PC-9 (cell line): ENCODE measurements at regions of chr15 and their contacts with region 1.

Region 1: DNA sequence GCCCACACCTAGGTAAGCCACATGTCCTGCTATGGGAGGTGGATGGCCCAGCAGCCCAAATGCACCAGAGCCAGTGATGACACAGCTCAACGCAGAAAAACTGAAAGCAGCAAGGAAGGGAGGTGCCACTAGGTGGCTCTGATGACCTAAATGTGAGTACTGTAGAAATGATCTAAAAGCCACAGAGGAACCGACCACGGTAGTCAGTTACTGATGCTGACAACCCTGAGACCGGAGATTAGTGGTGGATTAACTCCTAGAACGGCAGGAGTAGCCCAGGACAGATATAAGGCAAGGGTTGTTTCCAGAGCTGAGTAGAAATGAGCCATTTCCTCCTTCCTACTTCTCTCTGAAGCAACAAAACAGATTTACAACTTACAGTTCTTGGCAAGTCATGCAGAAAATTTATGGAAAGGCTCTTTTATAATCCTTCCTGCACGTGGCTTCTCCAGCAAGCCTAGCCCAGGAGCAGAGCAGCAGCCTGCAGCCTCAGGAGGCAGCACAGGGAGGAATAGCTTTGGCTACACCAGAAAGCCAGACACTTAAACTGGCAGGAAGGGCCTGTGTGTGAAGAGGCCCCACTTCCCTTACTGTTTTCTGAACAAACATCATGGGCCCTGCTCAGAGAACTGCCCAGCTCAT is 13.1 kb downstream of the FBXL22 start:
- DNase-seq: peak; percentile 68 to 77
- H3K4me3 ChIP-seq: no peak overlapping the region
- H3K27ac ChIP-seq: peak overlapping the region; percentile 55
- H3K4me1 ChIP-seq: peaks cover 22% of the 10 kb centered on the region
- H3K27me3 ChIP-seq: no peaks in the 10 kb centered on the region
- CTCF ChIP-seq: peak; percentile 84

Region 2: DNA sequence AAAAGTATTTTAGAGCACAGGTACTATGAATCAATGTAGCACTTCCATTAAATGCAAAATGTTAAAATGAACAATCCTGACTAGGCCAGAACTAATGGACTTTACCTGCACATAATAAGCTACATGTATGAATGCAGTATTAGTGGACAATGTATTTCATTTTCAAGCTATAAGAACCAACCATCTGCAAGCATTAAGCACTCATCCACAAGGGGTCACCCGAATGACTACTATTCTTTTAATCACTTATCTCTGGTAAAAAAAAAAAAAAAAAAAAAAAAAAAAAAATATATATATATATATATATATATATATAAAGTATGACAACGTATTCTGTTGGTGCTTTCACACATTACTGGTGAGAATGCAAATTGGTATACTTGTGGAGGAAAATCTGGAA is 216.2 kb after region 1 on chr15:
- CTCF ChIA-PET with region 1: interaction called, 17 read pairs
- POLR2A ChIA-PET with region 1: no interaction called
- intact Hi-C with region 1: no loop called
- DNase-seq: no peak
- H3K4me3 ChIP-seq: no peak overlapping the region
- H3K27ac ChIP-seq: no peak overlapping the region
- H3K4me1 ChIP-seq: no peaks in the 10 kb centered on the region
- H3K27me3 ChIP-seq: no peaks in the 10 kb centered on the region
- CTCF ChIP-seq: peak; percentile 38

Region 3: GRCh38 chr15:63833021-63833696 is 222.8 kb after region 1 on chr15:
- CTCF ChIA-PET with region 1: interaction called, 11 read pairs
- POLR2A ChIA-PET with region 1: no interaction called
- intact Hi-C with region 1: no loop called
- DNase-seq: peak in 1 of 2 experiments; percentile 37
- H3K4me3 ChIP-seq: peak overlapping the region; percentile 90
- H3K27ac ChIP-seq: no peak overlapping the region
- H3K4me1 ChIP-seq: peaks cover 16% of the 10 kb centered on the region
- H3K27me3 ChIP-seq: no peaks in the 10 kb centered on the region
- CTCF ChIP-seq: no peak

Region 4: DNA sequence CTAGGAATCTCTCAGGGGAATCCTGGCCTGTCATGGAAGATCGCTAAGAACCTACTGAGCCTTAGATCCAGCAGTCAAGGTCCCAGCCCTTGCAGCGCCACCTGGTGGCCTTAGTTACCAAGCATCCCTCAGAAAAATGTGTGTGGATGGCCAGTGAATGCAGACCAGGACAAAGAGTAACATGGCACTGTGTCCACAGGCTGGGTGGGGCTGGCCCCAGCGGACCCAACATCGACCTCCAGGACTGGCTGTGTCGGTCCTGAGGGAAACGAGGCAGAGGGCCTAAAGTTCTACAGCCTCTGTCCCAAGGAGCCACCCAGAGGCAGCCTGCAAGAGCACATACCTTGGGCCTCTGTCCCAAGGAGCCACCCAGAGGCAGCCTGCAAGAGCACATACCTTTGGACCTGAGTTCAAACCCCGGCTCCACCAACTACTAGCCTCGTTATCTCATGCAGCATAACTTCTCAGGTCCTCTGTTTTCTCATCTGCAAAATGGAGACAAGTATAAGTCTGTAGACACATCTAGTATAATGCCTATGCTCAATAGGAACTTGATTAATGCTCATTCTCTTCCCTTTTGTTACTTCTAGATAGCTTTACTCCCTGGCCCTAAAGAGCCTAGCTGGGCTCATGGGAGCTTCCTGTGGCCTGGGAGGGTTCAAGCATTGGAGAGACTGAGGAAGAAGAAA is 280.9 kb after region 1 on chr15:
- CTCF ChIA-PET with region 1: no interaction called
- POLR2A ChIA-PET with region 1: no interaction called
- intact Hi-C with region 1: loop called (anchors 5 kb)
- DNase-seq: peak; percentile 51 to 75
- H3K4me3 ChIP-seq: no peak overlapping the region
- H3K27ac ChIP-seq: no peak overlapping the region
- H3K4me1 ChIP-seq: peaks cover 13% of the 10 kb centered on the region
- H3K27me3 ChIP-seq: no peaks in the 10 kb centered on the region
- CTCF ChIP-seq: peak; percentile 84

Region 5: DNA sequence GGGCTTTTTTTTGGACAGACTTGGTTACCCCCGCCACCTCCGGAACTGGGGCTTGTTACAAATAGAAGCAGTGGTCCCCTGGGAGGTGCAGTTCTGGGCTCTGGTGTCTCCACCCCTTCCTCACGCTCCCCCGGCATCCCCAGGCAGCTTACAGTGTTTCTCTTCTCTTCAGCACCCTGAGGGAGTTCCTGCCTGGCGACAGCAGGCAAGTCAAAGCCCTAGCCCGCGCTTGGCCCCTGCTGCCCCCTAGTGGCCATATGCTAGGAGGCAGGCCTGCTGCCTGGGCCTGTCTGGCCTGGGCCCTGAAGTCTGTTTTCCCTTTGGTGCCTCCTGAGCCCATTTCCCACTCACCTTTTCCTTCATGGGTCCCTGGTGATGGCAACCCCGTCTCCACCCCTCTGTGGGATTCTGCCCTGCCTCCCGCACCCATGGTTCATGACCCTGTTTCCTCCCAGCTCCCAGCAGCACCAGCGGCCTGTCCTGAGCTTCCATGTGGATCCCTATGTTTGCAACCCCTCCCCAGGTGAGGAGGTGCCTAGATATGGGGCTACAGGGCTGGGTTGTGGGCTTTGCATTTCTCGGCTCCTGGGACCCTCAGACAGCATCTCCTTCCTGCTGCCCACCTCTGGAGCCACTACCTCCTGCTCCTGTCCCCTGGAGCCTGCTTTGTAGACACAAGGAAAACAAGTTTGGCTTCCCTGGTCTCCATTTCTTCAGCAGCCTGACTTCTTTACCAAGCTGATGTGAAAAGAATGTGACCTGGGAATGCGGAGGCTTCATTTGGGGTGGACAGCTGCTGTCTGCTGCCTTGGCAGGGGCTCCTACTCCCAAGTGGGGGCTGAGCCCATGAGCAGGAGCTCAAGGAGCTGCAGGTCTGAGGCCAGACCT is 543.4 kb after region 1 on chr15:
- CTCF ChIA-PET with region 1: interaction called, 6 read pairs
- POLR2A ChIA-PET with region 1: no interaction called
- intact Hi-C with region 1: loop called (anchors 5 kb)
- DNase-seq: peak; percentile 72 to 89
- H3K4me3 ChIP-seq: no peak overlapping the region
- H3K27ac ChIP-seq: no peak overlapping the region; the same call in 1 of the 2 replicates
- H3K4me1 ChIP-seq: no peaks in the 10 kb centered on the region
- H3K27me3 ChIP-seq: no peaks in the 10 kb centered on the region
- CTCF ChIP-seq: peak; percentile 90